ENCODE measurements at regions of chr12 and their contacts with region 1.

Region 1: GRCh38 chr12:92593734-92594402 is 108.9 kb upstream of the PLEKHG7 start:
- DNase-seq: peak; percentile 79
- H3K4me3 Mint-ChIP-seq: peak overlapping the region; percentile 72
- H3K27ac Mint-ChIP-seq: peak overlapping the region; percentile 99
- H3K4me1 Mint-ChIP-seq: peaks cover 63% of the 10 kb centered on the region
- H3K27me3 Mint-ChIP-seq: no peaks in the 10 kb centered on the region

Region 2: GRCh38 chr12:92185052-92185451 is 408.8 kb before region 1 on chr12:
- intact Hi-C with region 1: no loop called
- DNase-seq: peak; percentile 46
- H3K4me3 Mint-ChIP-seq: peak overlapping the region; percentile 19
- H3K27ac Mint-ChIP-seq: peak overlapping the region; percentile 70
- H3K4me1 Mint-ChIP-seq: peaks cover 63% of the 10 kb centered on the region
- H3K27me3 Mint-ChIP-seq: no peaks in the 10 kb centered on the region

Region 3: DNA sequence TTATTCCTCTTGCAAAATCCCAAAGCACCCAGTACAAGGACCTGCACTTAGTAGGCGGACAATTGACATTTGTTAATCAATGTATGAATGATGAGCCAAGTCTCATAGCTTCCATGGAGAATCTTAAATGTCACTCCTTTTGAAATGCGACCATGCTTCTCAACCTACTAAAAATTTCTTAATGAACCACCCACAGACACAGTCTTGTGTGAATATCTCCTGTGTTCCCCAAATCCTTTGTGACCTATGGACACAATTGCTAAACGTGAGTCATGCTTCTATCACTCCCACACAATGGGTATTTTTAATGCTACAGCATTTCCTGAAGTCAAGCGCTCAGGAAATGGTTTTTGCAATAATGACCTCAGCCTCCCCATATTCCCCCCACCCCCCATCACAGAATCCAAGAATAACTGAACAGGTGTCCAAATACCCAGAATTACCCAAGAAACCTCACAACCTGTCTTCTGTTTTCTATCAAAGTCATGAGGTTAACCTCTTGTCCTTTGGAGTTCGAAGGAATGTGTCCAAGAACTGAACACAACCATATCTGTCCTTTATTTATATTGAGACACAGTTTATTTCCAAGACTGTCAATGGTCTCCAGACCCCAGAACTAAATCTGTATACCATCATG is 54.6 kb before region 1 on chr12:
- intact Hi-C with region 1: loop called (anchors 1 kb)
- DNase-seq: no peak
- H3K4me3 Mint-ChIP-seq: peak overlapping the region; percentile 74
- H3K27ac Mint-ChIP-seq: peak overlapping the region; percentile 97
- H3K4me1 Mint-ChIP-seq: peaks cover 81% of the 10 kb centered on the region
- H3K27me3 Mint-ChIP-seq: no peaks in the 10 kb centered on the region

Region 4: DNA sequence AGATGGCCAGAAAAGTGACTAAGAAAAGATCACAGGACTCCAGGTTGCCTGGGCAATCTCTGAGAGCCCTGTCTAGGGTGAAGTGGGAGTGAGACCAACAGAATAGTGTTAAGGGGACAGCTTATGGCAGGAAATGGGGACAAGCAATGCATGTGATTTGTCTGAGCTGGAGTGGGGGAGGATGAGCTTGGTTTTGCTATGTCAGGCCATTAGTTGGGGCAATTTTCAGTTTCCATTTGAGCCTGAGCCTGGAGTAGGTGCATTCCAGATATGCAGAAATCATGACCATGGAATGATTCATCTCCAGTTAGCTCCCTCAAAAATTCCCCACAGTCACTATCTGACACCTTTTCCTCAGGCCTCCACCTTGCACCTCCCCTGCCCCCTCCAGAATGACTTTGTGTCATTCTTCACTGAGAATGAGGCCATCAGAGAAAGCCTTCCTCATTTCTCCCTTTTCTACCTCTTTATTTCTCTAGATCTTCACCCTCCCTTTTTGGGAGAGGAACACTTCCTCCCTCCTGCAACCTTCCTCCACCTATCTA is 41.9 kb before region 1 on chr12:
- intact Hi-C with region 1: loop called (anchors 2 kb)
- DNase-seq: no peak
- H3K4me3 Mint-ChIP-seq: no peak overlapping the region
- H3K27ac Mint-ChIP-seq: no peak overlapping the region
- H3K4me1 Mint-ChIP-seq: peaks cover 31% of the 10 kb centered on the region
- H3K27me3 Mint-ChIP-seq: no peaks in the 10 kb centered on the region

Region 5: DNA sequence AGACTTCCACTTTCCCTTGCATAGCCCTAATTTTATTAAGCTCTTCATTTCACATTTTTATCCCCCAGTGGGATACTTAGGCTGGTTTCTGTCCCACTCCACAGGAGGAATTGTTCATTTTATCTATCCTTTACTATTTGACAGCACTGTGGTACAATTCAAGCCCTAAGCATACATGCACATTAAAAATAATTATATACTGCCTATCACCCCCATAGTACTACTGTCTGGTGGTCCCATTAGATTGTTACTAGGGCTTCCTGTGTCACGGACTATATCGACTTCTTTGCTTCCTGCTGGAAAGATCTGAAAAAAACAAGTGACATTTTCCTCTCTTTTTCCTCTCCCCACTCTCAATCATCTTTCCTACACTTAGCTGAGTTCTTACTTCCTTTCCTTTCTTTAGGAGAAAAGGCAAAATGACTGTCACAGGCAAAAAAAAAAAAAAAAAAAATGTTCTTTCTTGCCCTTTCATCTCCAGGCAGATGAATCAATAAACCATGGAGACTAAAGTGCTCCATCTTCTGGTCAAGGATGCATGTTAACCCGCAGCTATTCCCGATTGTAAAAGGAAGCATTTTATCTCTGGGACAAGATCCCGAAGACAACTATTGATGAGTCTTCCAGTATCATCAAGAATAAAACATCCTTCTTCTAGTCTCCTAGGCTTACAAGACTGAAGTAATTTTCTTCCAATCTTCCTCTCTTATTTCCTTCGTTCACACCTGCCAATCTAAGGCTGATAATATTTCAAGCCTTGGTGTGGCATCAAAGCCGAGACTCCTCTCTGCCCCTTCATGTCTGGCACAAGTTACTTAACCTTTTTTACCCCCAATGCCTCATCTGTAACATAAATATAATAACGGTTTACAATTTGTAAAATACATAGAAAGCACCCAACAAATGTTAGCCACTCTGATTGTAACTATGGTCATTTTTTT is 14.6 kb after region 1 on chr12:
- intact Hi-C with region 1: loop called (anchors 1 kb)
- DNase-seq: no peak
- H3K4me3 Mint-ChIP-seq: no peak overlapping the region
- H3K27ac Mint-ChIP-seq: peak overlapping the region; percentile 59
- H3K4me1 Mint-ChIP-seq: peaks cover 26% of the 10 kb centered on the region
- H3K27me3 Mint-ChIP-seq: no peaks in the 10 kb centered on the region

Region 6: GRCh38 chr12:92673756-92674155 is 79.9 kb after region 1 on chr12:
- intact Hi-C with region 1: no loop called
- DNase-seq: no peak
- H3K4me3 Mint-ChIP-seq: no peak overlapping the region
- H3K27ac Mint-ChIP-seq: no peak overlapping the region
- H3K4me1 Mint-ChIP-seq: no peaks in the 10 kb centered on the region
- H3K27me3 Mint-ChIP-seq: peaks cover 5% of the 10 kb centered on the region

Measured in activated T-helper 1 cell treated with anti-CD3 and anti-CD28 coated beads, Interleukin-12 subunit alpha, Interleukin-12 subunit beta, Interleukin-2, Interleukin-4 antibody, amounts not matched to agents 30 ng/mL and 10 ng/mL and 1 ng/mL, durations not matched to agents 14 hours and 24 hours and 36 hours (primary cell).